K562 (cell line): ENCODE measurements at regions of chr11 and their contacts with region 1.

Region 1: DNA sequence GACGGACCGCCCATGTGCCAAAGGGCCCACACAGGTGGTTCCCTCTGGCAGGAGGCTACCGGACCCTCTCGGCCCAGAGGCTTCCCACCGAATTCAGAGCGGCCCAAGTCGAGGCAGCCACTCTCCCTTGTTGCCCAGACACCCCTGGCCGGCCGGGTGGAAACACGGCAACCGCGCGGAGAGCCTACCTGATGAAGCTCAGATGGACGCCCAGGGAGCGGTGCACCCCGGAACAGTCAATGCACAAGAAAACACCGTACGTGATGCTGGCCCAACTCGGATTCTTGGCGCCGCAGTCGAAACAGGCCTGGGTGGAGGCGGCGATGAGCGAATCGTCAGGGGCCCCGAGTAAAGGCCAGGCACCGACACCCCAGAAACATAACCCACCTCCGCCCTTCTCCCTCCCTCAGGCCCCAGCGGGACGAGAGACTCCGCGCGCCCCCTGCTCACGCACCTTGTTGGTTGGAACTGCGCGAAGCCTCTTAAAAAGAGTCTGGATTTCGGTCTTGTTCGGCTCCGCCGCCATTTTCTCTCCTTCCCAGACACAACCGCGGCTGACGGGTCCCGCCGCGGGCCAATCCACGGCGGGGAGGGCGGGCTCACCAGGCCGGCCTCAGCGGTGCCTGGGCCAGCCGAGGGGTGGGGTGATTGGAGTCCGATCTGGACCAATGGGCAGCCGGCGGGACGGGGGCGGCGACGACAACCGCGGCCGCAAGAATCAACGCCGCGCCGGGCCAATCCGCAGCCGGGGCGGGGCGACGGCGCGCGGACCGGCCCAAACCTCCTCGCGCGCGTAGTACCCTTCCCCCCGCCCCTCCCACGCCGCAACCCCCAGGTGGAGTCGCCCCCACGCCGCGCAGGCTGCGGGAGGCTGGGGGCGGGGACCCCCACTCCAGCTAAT is at the start of gene ARFGAP2:
- DNase-seq: peak; percentile 97 to 100 (median 98)
- ATAC-seq: peak; percentile 97
- H3K4me3 ChIP-seq: peak within 1 kb of the TSS; percentile 89
- H3K27ac ChIP-seq: peak within 1 kb of the TSS; percentile 97
- H3K4me1 ChIP-seq: peaks cover 16 to 32% of the 10 kb centered on the region in 2 experiments
- H3K27me3 ChIP-seq: no peaks in the 10 kb centered on the region
- CTCF ChIP-seq: no peak; a peak in 1 of 6 replicates
- EP300 ChIP-seq: no peak
- POLR2A ChIP-seq: peak; percentile 84
- RAD21 ChIP-seq: no peak
- polyA plus RNA-seq, gene ARFGAP2: 29.1 to 42.1 TPM

Region 2: DNA sequence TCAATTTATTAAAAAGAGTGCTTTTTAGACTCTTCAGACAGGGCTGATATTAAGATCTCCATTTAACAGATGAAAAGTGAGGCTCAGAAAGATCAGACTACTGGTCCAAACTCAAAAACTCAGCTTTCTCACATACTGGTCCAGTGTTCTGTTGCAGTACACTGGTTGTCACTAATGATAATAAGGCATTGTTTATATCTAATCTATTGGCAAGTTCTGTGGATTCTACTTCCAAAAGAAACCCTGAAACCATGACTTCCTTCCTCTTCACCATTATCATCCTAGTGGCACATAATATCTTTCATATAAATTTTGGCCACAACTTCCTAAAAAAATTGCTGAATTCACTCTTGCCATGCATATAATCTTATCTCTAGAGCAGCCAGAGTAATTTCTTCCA is 420.6 kb before region 1 on chr11:
- CTCF ChIA-PET with region 1: no interaction called
- POLR2A ChIA-PET with region 1: no interaction called
- in situ Hi-C with region 1: no loop called
- intact Hi-C with region 1: no loop called
- DNase-seq: no peak
- ATAC-seq: no peak
- H3K4me3 ChIP-seq: no peak overlapping the region
- H3K27ac ChIP-seq: no peak overlapping the region
- H3K4me1 ChIP-seq: no peaks in the 10 kb centered on the region
- H3K27me3 ChIP-seq: no peaks in the 10 kb centered on the region
- CTCF ChIP-seq: no peak
- EP300 ChIP-seq: no peak
- POLR2A ChIP-seq: no peak
- RAD21 ChIP-seq: no peak

Region 3: GRCh38 chr11:47233989-47234668 is 57.6 kb after region 1 on chr11:
- CTCF ChIA-PET with region 1: no interaction called
- POLR2A ChIA-PET with region 1: no interaction called
- in situ Hi-C with region 1: no loop called
- intact Hi-C with region 1: no loop called
- DNase-seq: peak in 3 of 4 experiments; percentile 15 to 57 (median 38)
- ATAC-seq: peak; percentile 84
- H3K4me3 ChIP-seq: no peak overlapping the region
- H3K27ac ChIP-seq: no peak overlapping the region
- H3K4me1 ChIP-seq: peaks cover 4 to 5% of the 10 kb centered on the region in 2 experiments; a peak in 2 of 5 replicates
- H3K27me3 ChIP-seq: no peaks in the 10 kb centered on the region
- CTCF ChIP-seq: peak; percentile 44 to 65 (median 64)
- EP300 ChIP-seq: no peak
- POLR2A ChIP-seq: no peak
- RAD21 ChIP-seq: peak; percentile 55 to 66

Region 4: DNA sequence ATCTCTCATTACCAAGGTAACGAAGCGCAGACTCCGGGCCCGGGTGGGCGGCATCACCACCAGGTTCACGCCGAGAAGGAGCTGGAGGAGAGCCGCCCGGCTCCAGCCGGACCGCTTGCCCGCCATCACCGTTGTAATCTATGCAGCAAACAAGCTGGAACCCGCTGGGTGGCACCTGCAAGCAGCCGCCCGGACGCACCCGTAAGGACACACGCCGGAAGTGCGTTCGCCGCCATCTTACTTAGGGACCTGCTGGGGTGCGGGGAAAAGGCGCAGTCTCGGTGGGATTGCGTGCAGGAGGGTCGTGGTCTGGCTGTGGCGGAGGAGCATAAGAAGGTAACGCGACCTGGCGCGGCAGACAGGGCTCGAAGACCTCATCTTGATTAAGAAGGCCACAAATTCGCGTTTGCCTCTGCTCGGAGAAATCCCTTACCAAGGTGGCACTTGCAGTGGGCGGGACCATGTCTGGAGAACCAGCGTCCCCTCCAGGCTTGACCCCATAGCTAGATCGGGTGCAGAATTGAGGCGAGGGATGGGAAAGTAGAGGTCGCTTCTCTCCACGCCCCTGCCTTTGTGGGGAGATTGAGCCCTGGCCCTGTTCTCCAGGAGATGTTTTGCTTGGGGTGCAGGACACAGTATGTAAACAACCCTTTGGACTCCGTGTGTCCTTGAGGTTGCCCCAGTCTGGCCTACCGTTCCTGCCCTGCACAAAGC is 72.2 kb after region 1 on chr11 and contains the start of gene ACP2:
- CTCF ChIA-PET with region 1: no interaction called
- POLR2A ChIA-PET with region 1: interaction called, 3 read pairs
- in situ Hi-C with region 1: no loop called
- intact Hi-C with region 1: loop called (anchors 2 kb)
- DNase-seq: peak; percentile 82 to 94 (median 84)
- ATAC-seq: peak; percentile 93
- H3K4me3 ChIP-seq: peak within 1 kb of the TSS; percentile 97
- H3K27ac ChIP-seq: peak within 1 kb of the TSS; percentile 96
- H3K4me1 ChIP-seq: peaks cover 13 to 19% of the 10 kb centered on the region in 2 experiments; a peak in 4 of 5 replicates
- H3K27me3 ChIP-seq: no peaks in the 10 kb centered on the region
- CTCF ChIP-seq: peak; percentile 53 to 66 (median 55); a peak in 5 of 6 replicates
- EP300 ChIP-seq: 0 out of 2 replicates have a peak, but pooled peaks have one; percentile 17
- POLR2A ChIP-seq: peak; percentile 94
- RAD21 ChIP-seq: peak; percentile 24
- polyA plus RNA-seq, gene ACP2: 1.9 to 2.2 TPM

Region 5: DNA sequence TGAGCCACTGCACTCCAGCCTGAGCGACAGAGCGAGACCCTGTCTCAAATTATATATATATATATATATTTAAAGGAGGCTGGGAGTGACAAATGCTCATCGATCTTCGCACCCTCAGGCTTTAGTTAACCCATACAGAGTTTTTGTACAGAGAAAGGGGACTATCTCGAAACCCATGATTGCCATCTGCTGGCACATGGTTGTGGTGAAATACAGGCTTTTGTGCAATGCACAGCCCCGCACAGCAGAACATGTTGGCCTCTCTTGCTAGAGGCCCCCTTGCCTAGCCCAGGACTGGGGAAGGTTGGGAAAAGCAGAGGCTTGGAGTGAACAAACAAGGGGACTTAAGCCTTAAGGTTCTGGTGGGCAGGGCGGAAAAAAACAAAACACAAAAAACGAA is 172.3 kb after region 1 on chr11:
- CTCF ChIA-PET with region 1: no interaction called
- POLR2A ChIA-PET with region 1: no interaction called
- in situ Hi-C with region 1: loop called (anchors 10 kb)
- intact Hi-C with region 1: no loop called
- DNase-seq: peak in 2 of 4 experiments; percentile 44 to 51
- ATAC-seq: peak; percentile 72
- H3K4me3 ChIP-seq: no peak overlapping the region
- H3K27ac ChIP-seq: no peak overlapping the region
- H3K4me1 ChIP-seq: peaks cover 0 to 40% of the 10 kb centered on the region in 2 experiments; a peak in 2 of 5 replicates
- H3K27me3 ChIP-seq: peaks cover 10 to 31% of the 10 kb centered on the region in 2 experiments; a peak in 4 of 5 replicates
- CTCF ChIP-seq: peak; percentile 30 to 62 (median 54); a peak in 4 of 6 replicates
- EP300 ChIP-seq: no peak
- POLR2A ChIP-seq: no peak
- RAD21 ChIP-seq: peak; percentile 20 to 66; a peak in 3 of 4 replicates

Region 6: GRCh38 chr11:47407746-47408590 is 231.4 kb after region 1 on chr11 and contains the start of gene SLC39A13:
- CTCF ChIA-PET with region 1: no interaction called
- POLR2A ChIA-PET with region 1: interaction called, 3 read pairs
- in situ Hi-C with region 1: no loop called
- intact Hi-C with region 1: loop called (anchors 2 kb)
- DNase-seq: peak; percentile 95 to 98 (median 96)
- ATAC-seq: peak; percentile 95
- H3K4me3 ChIP-seq: peak within 1 kb of the TSS; percentile 62
- H3K27ac ChIP-seq: peak within 1 kb of the TSS; percentile 98
- H3K4me1 ChIP-seq: peaks cover 28 to 54% of the 10 kb centered on the region in 2 experiments
- H3K27me3 ChIP-seq: no peaks in the 10 kb centered on the region
- CTCF ChIP-seq: peak; percentile 92 to 95 (median 94)
- EP300 ChIP-seq: no peak; the same call in none of the 2 replicates
- POLR2A ChIP-seq: peak; percentile 74
- RAD21 ChIP-seq: peak; percentile 98 to 99
- polyA plus RNA-seq, gene SLC39A13: 0.17 to 0.24 TPM